Mammary epithelial cell (primary cell): ENCODE measurements at regions of chr11 and their contacts with region 1.

Region 1: GRCh38 chr11:68810164-68810563 is 31.6 kb downstream of the CPT1A start:
- DNase-seq: no peak
- H3K4me3 ChIP-seq: no peak overlapping the region
- H3K27ac ChIP-seq: no peak overlapping the region
- H3K4me1 ChIP-seq: no peaks in the 10 kb centered on the region
- H3K27me3 ChIP-seq: no peaks in the 10 kb centered on the region
- CTCF ChIP-seq: no peak

Region 2: GRCh38 chr11:68066742-68067141 is 743.4 kb before region 1 on chr11:
- CTCF ChIA-PET with region 1: no interaction called
- dilution Hi-C with region 1: no loop called
- in situ Hi-C with region 1: no loop called
- intact Hi-C with region 1: no loop called
- DNase-seq: no peak
- H3K4me3 ChIP-seq: no peak overlapping the region
- H3K27ac ChIP-seq: no peak overlapping the region
- H3K4me1 ChIP-seq: no peaks in the 10 kb centered on the region
- H3K27me3 ChIP-seq: no peaks in the 10 kb centered on the region
- CTCF ChIP-seq: no peak

Region 3: DNA sequence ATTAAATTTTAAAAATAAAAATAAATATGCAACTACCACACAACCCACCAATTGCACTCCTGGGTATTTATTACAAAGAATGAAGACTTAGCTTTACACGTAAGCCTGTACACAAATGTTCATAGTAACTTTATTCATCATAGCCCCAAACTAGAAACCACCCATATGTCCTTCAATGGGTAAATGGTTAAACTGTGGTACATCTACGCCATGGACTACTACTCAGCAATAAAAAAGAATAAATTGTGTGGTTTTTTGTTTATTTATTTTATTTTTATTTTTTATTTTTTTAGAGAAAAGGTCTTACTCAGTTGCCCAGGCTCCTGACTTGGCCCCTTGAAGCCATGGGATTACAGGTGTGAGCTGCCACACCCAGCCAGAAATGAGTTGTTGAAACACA is 111.2 kb before region 1 on chr11:
- CTCF ChIA-PET with region 1: no interaction called
- dilution Hi-C with region 1: no loop called
- in situ Hi-C with region 1: no loop called
- intact Hi-C with region 1: no loop called
- DNase-seq: no peak
- H3K4me3 ChIP-seq: no peak overlapping the region
- H3K27ac ChIP-seq: no peak overlapping the region
- H3K4me1 ChIP-seq: no peaks in the 10 kb centered on the region
- H3K27me3 ChIP-seq: peaks cover 3% of the 10 kb centered on the region
- CTCF ChIP-seq: no peak

Region 4: GRCh38 chr11:68714060-68714856 is 95.9 kb before region 1 on chr11:
- CTCF ChIA-PET with region 1: no interaction called
- dilution Hi-C with region 1: loop called (anchors 5 kb)
- in situ Hi-C with region 1: no loop called
- intact Hi-C with region 1: no loop called
- DNase-seq: no peak
- H3K4me3 ChIP-seq: no peak overlapping the region
- H3K27ac ChIP-seq: no peak overlapping the region
- H3K4me1 ChIP-seq: no peaks in the 10 kb centered on the region
- H3K27me3 ChIP-seq: no peaks in the 10 kb centered on the region
- CTCF ChIP-seq: no peak

Region 5: DNA sequence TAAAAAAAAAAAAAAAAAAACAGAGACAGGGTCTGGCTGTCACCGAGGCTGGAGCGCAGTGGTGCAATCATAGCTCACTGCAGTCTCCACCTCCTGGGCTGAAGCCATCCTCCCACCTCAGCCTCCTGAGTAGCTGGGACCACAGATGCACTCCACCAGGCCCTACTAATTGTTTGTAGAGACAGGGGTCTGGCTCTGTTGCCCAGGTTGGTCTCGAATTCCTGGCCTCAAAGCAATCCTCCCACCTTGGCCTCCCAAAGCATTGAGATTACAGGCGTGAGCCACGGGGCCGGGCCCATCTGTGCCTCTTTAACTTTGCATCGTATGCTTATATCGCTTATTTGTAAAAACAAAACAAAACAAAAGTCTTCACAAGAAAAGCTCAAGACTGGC is 28.4 kb after region 1 on chr11:
- CTCF ChIA-PET with region 1: no interaction called
- dilution Hi-C with region 1: no loop called
- in situ Hi-C with region 1: no loop called
- intact Hi-C with region 1: no loop called
- DNase-seq: no peak
- H3K4me3 ChIP-seq: peak overlapping the region; percentile 40 to 50 (median 49)
- H3K27ac ChIP-seq: peak overlapping the region; percentile 42
- H3K4me1 ChIP-seq: peaks cover 32% of the 10 kb centered on the region
- H3K27me3 ChIP-seq: no peaks in the 10 kb centered on the region
- CTCF ChIP-seq: no peak

Region 6: DNA sequence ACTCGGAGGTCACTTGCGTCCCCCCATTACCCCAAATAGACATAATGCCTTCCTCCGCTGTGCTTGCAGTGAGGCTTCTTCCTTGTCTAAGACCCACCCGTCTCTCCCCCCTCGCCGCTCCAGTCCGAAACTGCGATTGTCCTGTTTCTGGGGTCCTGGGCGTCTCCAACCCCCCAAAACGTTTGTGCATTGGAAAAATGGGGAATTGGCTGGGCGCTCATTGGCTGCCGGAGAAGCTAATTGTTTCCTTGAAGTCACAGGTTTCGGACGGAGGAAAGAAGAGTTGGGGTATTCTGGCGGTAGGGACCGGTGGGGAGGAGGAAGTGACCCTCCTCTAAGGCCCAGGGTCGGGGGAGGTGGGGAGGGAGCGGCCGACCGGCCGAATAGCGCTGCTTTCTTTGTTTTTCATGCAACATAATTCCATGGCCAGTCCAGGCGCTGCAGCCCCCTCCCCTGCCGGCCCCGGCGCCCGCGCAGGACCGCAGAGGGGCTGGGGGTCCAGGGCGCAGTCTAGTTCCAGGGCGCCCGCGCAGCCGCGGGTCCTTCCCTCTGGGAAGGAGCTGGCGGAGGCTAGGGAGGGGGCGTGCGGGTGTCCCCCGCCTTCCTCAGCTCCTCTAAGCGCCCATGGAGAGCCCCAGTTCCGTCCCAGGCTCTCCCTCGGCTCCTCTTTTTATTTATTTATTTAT is 44.3 kb after region 1 on chr11:
- CTCF ChIA-PET with region 1: no interaction called
- dilution Hi-C with region 1: loop called (anchors 5 kb)
- in situ Hi-C with region 1: no loop called
- intact Hi-C with region 1: no loop called
- DNase-seq: no peak
- H3K4me3 ChIP-seq: no peak overlapping the region
- H3K27ac ChIP-seq: no peak overlapping the region
- H3K4me1 ChIP-seq: peaks cover 5% of the 10 kb centered on the region
- H3K27me3 ChIP-seq: peaks cover 17% of the 10 kb centered on the region
- CTCF ChIP-seq: no peak